Panc1 (cell line): ENCODE measurements at regions of chr11 and their contacts with region 1.

Region 1: GRCh38 chr11:72814286-72815109 is at the start of gene ATG16L2:
- DNase-seq: no peak
- ATAC-seq: peak; percentile 91
- H3K4me3 ChIP-seq: peak within 1 kb of the TSS; percentile 68 to 97
- H3K27ac ChIP-seq: peak within 1 kb of the TSS; percentile 65
- H3K4me1 ChIP-seq: peaks cover 10% of the 10 kb centered on the region
- H3K27me3 ChIP-seq: no peaks in the 10 kb centered on the region
- CTCF ChIP-seq: peak; percentile 31; the same call in 1 of the 2 replicates
- total RNA-seq, gene ATG16L2: 14.6 TPM

Region 2: DNA sequence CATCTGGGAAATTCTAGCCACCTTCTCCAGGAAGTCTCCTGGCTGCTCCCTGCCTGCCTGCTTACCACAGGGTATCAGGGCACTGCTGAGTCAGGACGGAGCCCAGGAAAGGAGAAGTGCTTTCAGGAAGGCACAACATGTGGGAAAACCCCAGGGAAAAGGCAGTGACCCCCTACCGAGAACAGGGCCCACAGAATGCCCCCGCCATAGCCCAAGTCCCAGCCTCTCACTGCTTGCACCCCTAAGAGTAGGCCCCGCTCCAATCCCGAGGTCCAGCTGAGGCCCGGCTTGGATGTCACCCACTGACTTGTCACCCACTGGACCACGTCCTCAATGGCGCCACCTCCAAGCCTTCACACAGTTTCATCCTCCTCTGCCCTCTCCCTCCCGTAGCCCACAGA is 96.4 kb before region 1 on chr11:
- CTCF ChIA-PET with region 1: interaction called, 15 read pairs
- POLR2A ChIA-PET with region 1: no interaction called
- in situ Hi-C with region 1: no loop called
- intact Hi-C with region 1: no loop called
- DNase-seq: no peak
- ATAC-seq: no peak
- H3K4me3 ChIP-seq: no peak overlapping the region
- H3K27ac ChIP-seq: no peak overlapping the region
- H3K4me1 ChIP-seq: peaks cover 19% of the 10 kb centered on the region
- H3K27me3 ChIP-seq: no peaks in the 10 kb centered on the region
- CTCF ChIP-seq: no peak

Region 3: GRCh38 chr11:72724851-72725730 is 89.4 kb before region 1 on chr11:
- CTCF ChIA-PET with region 1: interaction called, 10 read pairs
- POLR2A ChIA-PET with region 1: interaction called, 5 read pairs
- in situ Hi-C with region 1: no loop called
- intact Hi-C with region 1: loop called (anchors 2 kb)
- DNase-seq: peak; percentile 60
- ATAC-seq: peak; percentile 57
- H3K4me3 ChIP-seq: no peak overlapping the region
- H3K27ac ChIP-seq: no peak overlapping the region
- H3K4me1 ChIP-seq: peaks cover 19% of the 10 kb centered on the region
- H3K27me3 ChIP-seq: no peaks in the 10 kb centered on the region
- CTCF ChIP-seq: peak; percentile 96

Region 4: DNA sequence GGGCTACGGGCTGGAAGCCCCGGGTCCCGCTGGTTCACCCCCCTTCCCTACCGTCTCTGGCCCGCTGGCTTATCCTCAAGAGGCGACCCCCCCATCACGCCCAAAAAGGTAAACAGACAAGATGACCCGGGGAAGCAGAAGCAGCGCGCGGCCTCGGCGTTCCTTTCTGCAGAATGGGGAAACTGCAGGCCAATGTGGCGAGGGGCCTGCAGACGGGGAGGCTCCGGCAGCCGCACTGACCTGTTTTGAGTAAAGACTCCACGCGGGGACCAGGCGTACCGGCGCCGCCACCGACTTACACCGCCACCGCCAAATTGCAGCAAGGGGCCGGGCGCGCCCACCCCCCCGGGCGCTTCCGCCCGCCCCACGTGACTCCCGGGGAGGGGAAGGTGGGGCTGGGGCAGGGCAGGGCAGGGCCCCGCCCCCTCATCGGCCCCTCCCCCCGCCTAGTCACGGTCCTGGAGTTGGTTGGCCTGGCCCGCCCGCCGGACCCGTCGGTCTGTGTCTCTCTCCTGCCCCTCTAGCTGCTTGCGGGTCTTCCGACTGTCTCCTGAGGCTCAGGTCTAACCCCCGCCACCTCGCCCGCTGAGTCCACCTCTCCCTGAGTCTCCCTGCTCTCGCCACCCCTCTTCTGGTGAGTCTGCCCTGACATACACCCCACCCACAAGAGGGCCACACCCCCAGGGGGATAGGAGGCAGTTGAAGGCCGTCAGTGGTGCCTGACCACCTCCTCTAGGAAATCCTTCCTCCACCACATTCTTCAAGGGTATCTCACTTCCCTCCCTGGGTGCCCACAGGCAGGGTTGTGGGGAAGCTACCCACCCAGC is 62.2 kb before region 1 on chr11 and contains the start of gene ARAP1:
- CTCF ChIA-PET with region 1: interaction called, 10 read pairs
- POLR2A ChIA-PET with region 1: no interaction called
- in situ Hi-C with region 1: no loop called
- intact Hi-C with region 1: no loop called
- DNase-seq: peak; percentile 32
- ATAC-seq: peak; percentile 91
- H3K4me3 ChIP-seq: peak within 1 kb of the TSS; percentile 84 to 89
- H3K27ac ChIP-seq: peak within 1 kb of the TSS; percentile 87
- H3K4me1 ChIP-seq: peaks cover 17% of the 10 kb centered on the region
- H3K27me3 ChIP-seq: no peaks in the 10 kb centered on the region
- CTCF ChIP-seq: no peak
- total RNA-seq, gene ARAP1: 73.6 TPM

Region 5: GRCh38 chr11:72772978-72773690 is 41.4 kb before region 1 on chr11:
- CTCF ChIA-PET with region 1: no interaction called
- POLR2A ChIA-PET with region 1: no interaction called
- in situ Hi-C with region 1: no loop called
- intact Hi-C with region 1: no loop called
- DNase-seq: no peak
- ATAC-seq: no peak
- H3K4me3 ChIP-seq: no peak overlapping the region
- H3K27ac ChIP-seq: no peak overlapping the region
- H3K4me1 ChIP-seq: peaks cover 3% of the 10 kb centered on the region
- H3K27me3 ChIP-seq: no peaks in the 10 kb centered on the region
- CTCF ChIP-seq: no peak

Region 6: GRCh38 chr11:73314117-73314961 is 499.8 kb after region 1 on chr11:
- CTCF ChIA-PET with region 1: interaction called, 11 read pairs
- POLR2A ChIA-PET with region 1: no interaction called
- in situ Hi-C with region 1: no loop called
- intact Hi-C with region 1: no loop called
- DNase-seq: no peak
- ATAC-seq: peak; percentile 23; the same call in 1 of the 2 replicates
- H3K4me3 ChIP-seq: no peak overlapping the region
- H3K27ac ChIP-seq: peak overlapping the region; percentile 24; the same call in 1 of the 2 replicates
- H3K4me1 ChIP-seq: peaks cover 55% of the 10 kb centered on the region
- H3K27me3 ChIP-seq: no peaks in the 10 kb centered on the region
- CTCF ChIP-seq: no peak